ENCODE measurements at regions of chr14 and their contacts with region 1.

Region 1: GRCh38 chr14:31026395-31027118 is 378 bp upstream of the STRN3 start:
- DNase-seq: peak; percentile 85
- ATAC-seq: peak; percentile 94
- H3K4me3 ChIP-seq: peak overlapping the region; percentile 92
- H3K27ac ChIP-seq: peak overlapping the region; percentile 93
- H3K4me1 ChIP-seq: peaks cover 15% of the 10 kb centered on the region
- H3K27me3 ChIP-seq: no peaks in the 10 kb centered on the region
- CTCF ChIP-seq: no peak
- EP300 ChIP-seq: no peak
- POLR2A ChIP-seq: peak; percentile 63
- RAD21 ChIP-seq: no peak

Region 2: DNA sequence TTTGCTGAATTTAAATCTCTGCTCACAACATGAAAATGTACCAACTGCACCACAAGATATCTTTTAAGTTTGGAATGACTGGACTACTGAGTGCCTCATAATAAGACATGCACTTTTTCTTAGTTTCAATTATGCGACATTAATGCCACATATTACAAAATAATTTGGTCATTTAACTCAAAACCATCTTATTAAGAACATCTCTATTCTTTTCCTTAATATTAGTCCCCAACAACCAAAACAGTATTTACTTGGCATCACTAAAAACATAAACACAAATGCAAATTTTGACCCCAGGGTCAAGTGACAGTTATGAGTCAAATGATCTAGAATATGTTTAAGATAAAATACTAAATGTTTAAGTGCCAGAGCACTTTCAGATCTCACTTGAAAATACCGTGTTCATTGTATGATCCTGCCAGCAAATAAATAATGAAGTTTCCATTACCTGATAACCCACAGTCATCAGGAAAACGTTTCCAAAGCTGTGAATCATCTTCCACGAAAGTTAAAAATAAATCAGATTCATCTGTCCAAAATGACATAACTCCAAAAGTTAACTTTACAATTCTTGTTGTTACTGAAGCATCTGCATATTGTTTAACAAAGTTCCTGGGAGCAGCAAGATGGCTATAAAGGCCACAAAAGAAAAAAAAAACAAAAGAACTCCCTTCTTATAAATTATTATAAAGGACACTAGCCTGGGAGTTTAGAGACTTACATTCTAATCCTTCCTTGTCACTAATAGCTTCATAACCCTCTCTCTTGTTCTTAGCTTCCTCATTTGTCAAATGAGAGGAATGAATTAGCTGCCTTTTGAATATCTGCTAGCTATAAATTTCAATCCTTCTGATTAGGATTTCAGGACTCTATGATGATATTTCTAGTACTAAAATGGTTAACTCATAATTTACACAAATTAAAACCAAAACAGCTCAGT is 31.6 kb before region 1 on chr14:
- CTCF ChIA-PET with region 1: interaction called, 7 read pairs
- POLR2A ChIA-PET with region 1: interaction called, 12 read pairs
- RAD21 ChIA-PET with region 1: interaction called, 7 read pairs
- SMC1A ChIA-PET with region 1: interaction called, 8 read pairs
- in situ Hi-C with region 1: no loop called
- intact Hi-C with region 1: no loop called
- DNase-seq: peak; percentile 8
- ATAC-seq: peak; percentile 87
- H3K4me3 ChIP-seq: no peak overlapping the region
- H3K27ac ChIP-seq: peak overlapping the region; percentile 7; the same call in 1 of the 2 replicates
- H3K4me1 ChIP-seq: peaks cover 9% of the 10 kb centered on the region; the same call in 1 of the 2 replicates
- H3K27me3 ChIP-seq: no peaks in the 10 kb centered on the region
- CTCF ChIP-seq: no peak
- EP300 ChIP-seq: peak; percentile 9 to 30; a peak in 2 of 4 replicates
- POLR2A ChIP-seq: no peak
- RAD21 ChIP-seq: no peak

Region 3: GRCh38 chr14:31038521-31039166 is 12.1 kb after region 1 on chr14:
- CTCF ChIA-PET with region 1: interaction called, 9 read pairs
- POLR2A ChIA-PET with region 1: interaction called, 13 read pairs
- RAD21 ChIA-PET with region 1: interaction called, 8 read pairs
- SMC1A ChIA-PET with region 1: interaction called, 8 read pairs
- in situ Hi-C with region 1: no loop called
- intact Hi-C with region 1: no loop called
- DNase-seq: no peak
- ATAC-seq: peak; percentile 71
- H3K4me3 ChIP-seq: no peak overlapping the region
- H3K27ac ChIP-seq: no peak overlapping the region
- H3K4me1 ChIP-seq: no peaks in the 10 kb centered on the region
- H3K27me3 ChIP-seq: no peaks in the 10 kb centered on the region
- CTCF ChIP-seq: no peak
- EP300 ChIP-seq: no peak
- POLR2A ChIP-seq: no peak
- RAD21 ChIP-seq: no peak

Measured in GM12878 (cell line).